Naive thymus-derived CD4-positive, alpha-beta T cell (primary cell): ENCODE measurements at regions of chr21 and their contacts with region 1.

Region 1: DNA sequence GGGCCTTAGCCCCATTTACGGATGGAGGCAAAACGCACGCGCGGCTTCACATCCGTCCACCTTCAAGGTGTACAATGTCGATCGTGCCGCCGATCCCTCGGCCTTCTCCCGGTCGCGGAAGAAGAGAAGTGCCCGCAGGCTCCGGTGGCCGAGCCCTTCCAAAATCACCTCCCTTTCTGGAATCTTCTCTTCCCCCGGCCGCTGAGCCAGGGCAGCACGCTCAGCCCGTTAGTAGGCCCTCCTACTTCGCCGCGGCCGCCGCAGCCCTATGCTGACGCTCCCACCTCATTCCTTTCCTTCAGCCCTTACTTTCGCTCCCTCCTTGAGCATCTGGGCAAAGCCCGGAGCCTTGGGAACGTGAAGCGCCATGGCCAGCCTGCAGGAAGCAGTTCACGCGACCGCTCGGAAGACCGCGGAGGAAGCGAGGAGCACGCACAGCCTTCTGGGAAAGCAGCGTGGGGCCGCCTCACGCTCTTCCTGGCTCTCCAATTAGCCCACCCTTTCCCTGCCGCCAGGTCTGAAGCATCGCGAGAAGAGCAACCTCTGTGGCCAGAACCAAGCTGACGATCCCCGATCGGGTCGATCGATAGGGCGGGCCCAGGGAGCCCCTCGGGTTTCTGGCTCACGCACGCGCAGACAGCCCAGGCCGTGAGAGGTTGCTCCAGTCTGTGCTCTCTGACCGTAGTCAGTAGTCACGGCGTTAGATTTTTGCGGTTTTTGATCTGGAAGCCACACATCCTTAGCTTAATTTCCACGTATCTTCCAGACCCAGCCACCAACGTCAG is at the start of gene CCT8:
- DNase-seq: peak; percentile 93 to 100 (median 98)
- ATAC-seq: peak; percentile 96
- H3K4me3 ChIP-seq: peak within 1 kb of the TSS; percentile 80
- H3K4me3 Mint-ChIP-seq: peak within 1 kb of the TSS; percentile 98 to 100 (median 99)
- H3K27ac ChIP-seq: peak within 1 kb of the TSS; percentile 88
- H3K27ac Mint-ChIP-seq: peak within 1 kb of the TSS; percentile 97 to 100 (median 99)
- H3K4me1 ChIP-seq: peaks cover 24 to 25% of the 10 kb centered on the region in 2 donors
- H3K4me1 Mint-ChIP-seq: peaks cover 19 to 78% (median 67%) of the 10 kb centered on the region in 7 donors
- H3K27me3 ChIP-seq: no peaks in the 10 kb centered on the region
- H3K27me3 Mint-ChIP-seq: no peaks in the 10 kb centered on the region
- total RNA-seq, gene CCT8: 87.6 to 223 (median 126) TPM

Region 2: DNA sequence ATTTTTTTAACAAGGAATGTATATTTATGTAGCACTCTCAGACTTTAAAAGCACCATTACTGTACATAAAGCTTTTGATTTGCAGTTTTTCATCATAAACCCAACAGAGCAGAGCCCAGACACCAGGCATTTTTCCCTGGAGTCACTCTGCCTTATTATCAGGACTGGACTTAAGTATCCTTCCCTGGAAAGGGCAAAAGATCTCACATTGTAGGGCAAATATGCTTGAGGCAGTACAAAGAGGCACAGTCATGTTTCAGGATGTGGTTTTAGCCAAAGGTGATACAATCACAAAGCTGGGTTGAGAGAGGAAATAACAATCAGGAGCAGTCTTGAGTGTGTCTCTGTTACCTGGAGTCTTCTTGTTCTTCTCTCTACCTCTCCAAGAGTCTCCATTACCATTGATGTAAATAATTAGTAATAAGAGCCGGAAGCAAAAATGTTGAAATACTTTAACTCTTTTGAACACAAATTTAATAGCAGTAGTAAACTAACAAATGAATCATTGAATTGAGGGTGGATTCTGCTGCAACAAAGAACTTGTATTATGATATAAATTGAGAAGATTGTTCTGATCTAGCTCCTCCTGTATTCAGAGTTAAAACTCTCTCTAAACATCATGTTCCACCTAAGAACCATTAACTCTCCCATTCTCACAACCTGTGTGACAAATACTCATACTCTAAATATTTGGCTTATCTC is 241.2 kb before region 1 on chr21:
- CTCF ChIA-PET with region 1: no interaction called
- POLR2A ChIA-PET with region 1: no interaction called
- intact Hi-C with region 1: loop called in 1 of 2 experiments (anchors 1 kb)
- DNase-seq: peak in 6 of 9 donors; percentile 29 to 64 (median 52)
- ATAC-seq: peak; percentile 91
- H3K4me3 ChIP-seq: peak overlapping the region; percentile 21
- H3K4me3 Mint-ChIP-seq: peak overlapping the region; percentile 12 to 75 (median 68)
- H3K27ac ChIP-seq: no peak overlapping the region
- H3K27ac Mint-ChIP-seq: peak overlapping the region; percentile 2 to 97 (median 68)
- H3K4me1 ChIP-seq: peaks cover 52 to 56% of the 10 kb centered on the region in 2 donors
- H3K4me1 Mint-ChIP-seq: peaks cover 46 to 82% (median 76%) of the 10 kb centered on the region in 7 donors
- H3K27me3 ChIP-seq: no peaks in the 10 kb centered on the region
- H3K27me3 Mint-ChIP-seq: no peaks in the 10 kb centered on the region

Region 3: DNA sequence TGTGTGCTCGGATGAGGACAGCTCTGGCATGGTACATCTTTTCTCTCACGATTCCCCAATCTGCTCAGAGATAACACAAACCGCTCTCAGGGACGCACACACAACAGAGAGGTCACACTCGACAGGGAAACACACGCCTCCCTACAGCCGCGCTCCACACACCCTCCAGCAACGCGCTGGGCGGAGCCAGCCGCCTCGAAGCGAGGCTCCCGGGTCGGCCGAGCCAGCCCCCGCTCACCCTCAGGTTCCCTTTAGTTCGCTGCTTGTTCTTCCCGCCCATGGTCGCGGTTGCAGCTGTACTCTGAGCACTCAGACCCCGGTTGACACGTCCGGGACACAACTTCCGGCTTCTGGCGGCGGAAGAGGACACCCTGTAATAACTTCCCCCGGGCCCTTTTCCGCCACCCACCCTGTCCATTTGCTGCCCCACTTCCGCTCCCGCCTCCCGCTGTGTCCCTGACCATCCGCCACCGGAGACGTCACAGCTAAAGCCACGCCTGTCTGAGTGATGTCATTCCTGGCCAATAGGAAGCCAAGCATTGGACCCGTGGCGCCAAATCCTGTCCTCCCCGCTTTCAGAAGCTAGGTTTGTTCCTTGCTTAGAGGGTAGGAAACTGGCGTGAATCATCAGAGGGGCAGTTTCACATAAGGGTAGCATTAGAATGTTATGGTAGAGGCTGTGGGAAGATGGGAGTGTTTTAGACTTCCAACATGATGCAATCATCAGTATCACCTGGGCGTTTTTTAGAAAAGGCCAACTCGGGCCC is 80.7 kb before region 1 on chr21 and contains the start of gene LTN1:
- CTCF ChIA-PET with region 1: no interaction called
- POLR2A ChIA-PET with region 1: interaction called, 10 read pairs
- intact Hi-C with region 1: loop called (anchors 1 kb)
- DNase-seq: peak; percentile 91 to 99 (median 98)
- ATAC-seq: peak; percentile 98
- H3K4me3 ChIP-seq: peak within 1 kb of the TSS; percentile 86
- H3K4me3 Mint-ChIP-seq: peak within 1 kb of the TSS; percentile 89 to 99 (median 94)
- H3K27ac ChIP-seq: peak within 1 kb of the TSS; percentile 87
- H3K27ac Mint-ChIP-seq: peak within 1 kb of the TSS; percentile 94 to 99 (median 98)
- H3K4me1 ChIP-seq: peaks cover 11 to 23% of the 10 kb centered on the region in 2 donors
- H3K4me1 Mint-ChIP-seq: peaks cover 26 to 58% (median 42%) of the 10 kb centered on the region in 7 donors
- H3K27me3 ChIP-seq: no peaks in the 10 kb centered on the region
- H3K27me3 Mint-ChIP-seq: no peaks in the 10 kb centered on the region
- total RNA-seq, gene LTN1: 27.3 to 36.3 (median 31.3) TPM

Region 4: GRCh38 chr21:29024474-29025327 is 48.7 kb before region 1 on chr21 and contains the start of gene USP16:
- CTCF ChIA-PET with region 1: interaction called, 5 read pairs
- POLR2A ChIA-PET with region 1: interaction called, 103 read pairs
- intact Hi-C with region 1: loop called (anchors 1 kb)
- DNase-seq: peak; percentile 86 to 97 (median 96)
- ATAC-seq: peak; percentile 94
- H3K4me3 ChIP-seq: peak within 1 kb of the TSS; percentile 88
- H3K4me3 Mint-ChIP-seq: peak within 1 kb of the TSS; percentile 88 to 99 (median 96)
- H3K27ac ChIP-seq: peak within 1 kb of the TSS; percentile 93
- H3K27ac Mint-ChIP-seq: peak within 1 kb of the TSS; percentile 97 to 100 (median 99)
- H3K4me1 ChIP-seq: peaks cover 35 to 41% of the 10 kb centered on the region in 2 donors
- H3K4me1 Mint-ChIP-seq: peaks cover 21 to 79% (median 53%) of the 10 kb centered on the region in 7 donors
- H3K27me3 ChIP-seq: no peaks in the 10 kb centered on the region
- H3K27me3 Mint-ChIP-seq: no peaks in the 10 kb centered on the region
- total RNA-seq, gene USP16: 40.9 to 84.3 (median 62.7) TPM

Region 5: DNA sequence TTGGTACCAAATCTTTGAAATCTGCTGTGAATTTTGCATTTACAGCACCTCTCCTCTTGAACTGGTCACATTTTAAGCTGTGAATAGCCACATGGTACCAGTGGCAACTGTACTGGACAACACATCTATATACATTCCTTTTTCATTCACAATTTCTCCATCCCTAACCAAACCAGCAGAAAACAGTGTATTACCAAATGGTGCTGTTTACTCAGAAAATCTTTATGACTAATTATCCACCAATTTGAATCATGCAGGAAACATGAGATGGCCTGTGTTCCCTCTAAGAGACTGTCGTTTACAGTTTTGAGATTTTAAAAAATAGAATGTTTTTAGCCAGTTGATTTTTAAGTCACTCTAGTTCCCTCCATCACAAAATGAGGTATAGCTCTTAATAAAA is 17.6 kb after region 1 on chr21:
- CTCF ChIA-PET with region 1: interaction called, 4 read pairs
- POLR2A ChIA-PET with region 1: interaction called, 5 read pairs
- intact Hi-C with region 1: loop called in 1 of 2 experiments (anchors 1 kb)
- DNase-seq: no peak
- ATAC-seq: peak; percentile 9
- H3K4me3 ChIP-seq: no peak overlapping the region
- H3K4me3 Mint-ChIP-seq: no peak overlapping the region
- H3K27ac ChIP-seq: no peak overlapping the region
- H3K27ac Mint-ChIP-seq: no peak overlapping the region
- H3K4me1 ChIP-seq: no peaks in the 10 kb centered on the region
- H3K4me1 Mint-ChIP-seq: peaks cover 0 to 9% (median 0%) of the 10 kb centered on the region in 7 donors
- H3K27me3 ChIP-seq: no peaks in the 10 kb centered on the region
- H3K27me3 Mint-ChIP-seq: peaks cover 0 to 3% (median 0%) of the 10 kb centered on the region in 5 donors

Region 6: DNA sequence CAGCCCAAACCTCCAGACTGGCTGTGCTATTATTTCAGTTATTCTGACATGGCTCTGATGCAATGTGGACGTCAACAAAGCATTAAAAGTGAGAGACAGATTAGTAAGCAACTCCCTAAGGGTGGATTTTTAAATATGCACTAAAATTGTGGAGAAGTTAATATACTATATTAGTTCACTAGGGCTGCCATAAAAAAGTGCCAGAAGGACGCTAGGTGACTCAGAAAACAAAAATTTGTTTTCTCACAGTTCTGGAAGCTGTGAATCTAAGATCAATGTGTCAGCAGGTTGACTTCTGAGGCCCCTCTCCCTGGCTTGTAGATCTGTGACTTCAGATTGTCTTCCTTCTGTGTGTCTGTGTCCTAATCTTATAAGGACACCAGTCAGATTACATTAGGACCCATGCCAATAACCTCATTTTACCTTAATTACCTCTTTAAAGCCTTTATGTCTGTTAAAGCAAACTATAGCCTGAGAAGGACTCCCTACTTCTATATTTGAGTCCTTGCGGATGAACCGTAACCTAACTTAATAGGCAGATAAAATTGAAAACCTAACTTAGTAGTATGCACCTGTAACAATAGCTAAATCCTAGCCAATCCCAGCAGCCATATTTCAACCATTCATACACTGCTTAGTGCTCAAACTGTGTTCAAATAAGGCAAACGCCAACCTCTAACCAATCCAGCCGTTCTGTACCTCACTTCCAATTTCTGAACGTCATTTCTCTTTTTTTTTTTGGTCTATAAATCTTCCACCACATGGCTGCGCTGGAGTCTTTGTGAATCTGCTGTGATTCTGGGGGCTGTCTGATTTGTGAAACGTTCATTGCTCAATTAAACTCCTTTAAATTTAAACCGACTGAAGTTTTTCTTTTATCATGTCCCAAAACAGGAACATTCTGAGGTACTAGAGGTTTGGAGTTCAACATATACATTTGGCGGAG is 159.5 kb after region 1 on chr21:
- CTCF ChIA-PET with region 1: no interaction called
- POLR2A ChIA-PET with region 1: no interaction called
- intact Hi-C with region 1: no loop called
- DNase-seq: peak in 2 of 9 donors; percentile 3 to 8
- ATAC-seq: peak; percentile 24
- H3K4me3 ChIP-seq: no peak overlapping the region
- H3K4me3 Mint-ChIP-seq: peak overlapping the region in 1 of 10 donors; percentile 40
- H3K27ac ChIP-seq: no peak overlapping the region
- H3K27ac Mint-ChIP-seq: peak overlapping the region in 1 of 9 donors; percentile 45
- H3K4me1 ChIP-seq: no peaks in the 10 kb centered on the region
- H3K4me1 Mint-ChIP-seq: peaks cover 5 to 40% (median 6%) of the 10 kb centered on the region in 7 donors
- H3K27me3 ChIP-seq: no peaks in the 10 kb centered on the region
- H3K27me3 Mint-ChIP-seq: peaks cover 0 to 14% (median 0%) of the 10 kb centered on the region in 5 donors

Region 7: DNA sequence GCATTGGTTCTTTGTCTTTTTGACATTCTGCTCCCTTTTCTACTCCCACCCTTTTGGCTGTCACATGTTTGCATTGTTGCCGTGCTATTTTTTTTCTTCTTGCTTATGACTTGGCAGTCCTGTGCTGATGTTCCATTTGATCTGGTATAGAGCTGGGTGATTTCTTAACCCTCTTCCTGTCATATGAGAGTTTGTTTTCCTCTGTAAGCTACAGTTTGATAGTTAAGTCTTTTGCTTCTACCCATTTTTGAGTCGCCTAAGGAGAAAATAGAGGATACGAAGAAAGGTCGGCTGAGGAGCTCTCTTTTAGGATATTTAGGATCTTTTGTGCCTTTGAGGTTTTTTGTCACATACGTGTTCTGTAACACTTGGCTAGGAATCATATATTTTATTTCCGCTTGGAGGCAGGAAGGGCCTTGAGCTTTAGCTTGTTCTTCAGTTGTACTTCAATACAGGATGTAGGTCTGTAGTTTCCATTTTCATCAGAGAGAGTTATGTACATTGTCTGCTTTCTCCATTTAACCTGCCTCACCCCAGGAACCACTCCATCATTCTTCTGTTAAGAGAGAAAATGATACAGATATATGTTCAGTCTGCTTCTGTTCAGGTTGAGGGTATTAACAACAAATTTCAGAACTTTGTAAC is 376.0 kb after region 1 on chr21:
- CTCF ChIA-PET with region 1: interaction called, 3 read pairs
- POLR2A ChIA-PET with region 1: interaction called, 21 read pairs
- intact Hi-C with region 1: loop called in 1 of 2 experiments (anchors 1 kb)
- DNase-seq: peak in 7 of 9 donors; percentile 50 to 90 (median 76)
- ATAC-seq: peak; percentile 93
- H3K4me3 ChIP-seq: peak overlapping the region; percentile 17
- H3K4me3 Mint-ChIP-seq: peak overlapping the region; percentile 1 to 77 (median 64)
- H3K27ac ChIP-seq: peak overlapping the region; percentile 66
- H3K27ac Mint-ChIP-seq: peak overlapping the region; percentile 84 to 98 (median 94)
- H3K4me1 ChIP-seq: peaks cover 7 to 17% of the 10 kb centered on the region in 2 donors
- H3K4me1 Mint-ChIP-seq: peaks cover 5 to 67% (median 24%) of the 10 kb centered on the region in 7 donors
- H3K27me3 ChIP-seq: no peaks in the 10 kb centered on the region
- H3K27me3 Mint-ChIP-seq: no peaks in the 10 kb centered on the region